ENCODE measurements at regions of chr10 and their contacts with region 1.

Region 1: DNA sequence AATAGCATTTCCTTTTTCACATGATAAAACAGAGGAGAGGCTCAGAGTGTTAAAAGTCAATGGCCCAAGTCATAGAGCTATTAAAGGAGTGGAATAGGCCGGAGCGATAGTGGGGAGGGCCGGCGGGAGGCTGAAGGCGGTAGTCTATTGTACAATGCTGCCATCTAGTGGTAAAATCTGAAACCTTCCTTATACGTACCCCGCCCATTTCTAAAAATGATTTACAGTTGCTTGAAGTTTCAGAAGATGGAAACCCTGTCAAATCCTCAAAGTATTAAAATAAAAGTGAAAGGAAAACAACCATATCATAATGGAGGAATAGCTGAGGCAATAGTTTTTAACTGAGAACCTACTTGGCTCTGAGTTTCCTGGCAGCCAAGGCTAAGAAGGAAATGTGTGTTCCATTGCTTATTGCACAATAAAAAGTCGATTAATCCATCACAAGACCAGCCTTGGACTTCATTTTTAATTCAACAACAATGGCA is 209.1 kb downstream of the CCSER2 start:
- DNase-seq: peak in 5 of 9 experiments; percentile 22 to 76 (median 60)
- ATAC-seq: peak; percentile 69
- H3K4me3 ChIP-seq: no peak overlapping the region
- H3K4me3 Mint-ChIP-seq: no peak overlapping the region
- H3K27ac ChIP-seq: no peak overlapping the region
- H3K27ac Mint-ChIP-seq: no peak overlapping the region
- H3K4me1 ChIP-seq: peaks cover 4% of the 10 kb centered on the region
- H3K4me1 Mint-ChIP-seq: peaks cover 8% of the 10 kb centered on the region
- H3K27me3 ChIP-seq: peaks cover 5 to 9% of the 10 kb centered on the region in 2 experiments
- H3K27me3 Mint-ChIP-seq: peaks cover 24% of the 10 kb centered on the region
- CTCF ChIP-seq: peak; percentile 94

Region 2: DNA sequence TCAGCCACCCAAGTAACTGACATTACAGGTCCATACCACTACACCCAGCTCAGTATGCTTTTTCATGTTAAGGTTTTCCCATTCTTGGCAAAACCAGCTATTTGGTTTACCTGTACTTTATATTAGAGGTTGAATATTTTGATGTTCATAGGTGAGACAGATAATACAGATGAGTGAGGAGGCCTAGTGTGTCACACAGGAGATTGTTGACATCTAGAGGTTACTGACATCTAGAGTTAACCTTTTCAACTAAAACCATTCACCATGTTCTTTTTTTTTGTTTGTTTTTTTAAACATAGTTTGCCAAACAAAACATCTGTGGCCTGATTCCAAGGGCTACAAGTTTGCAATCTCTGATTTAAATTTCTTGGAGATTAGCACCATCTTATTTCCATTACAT is 390.1 kb before region 1 on chr10:
- CTCF ChIA-PET with region 1: no interaction called
- POLR2A ChIA-PET with region 1: no interaction called
- intact Hi-C with region 1: loop called in 1 of 2 experiments (anchors 5 kb)
- DNase-seq: no peak
- ATAC-seq: no peak
- H3K4me3 ChIP-seq: no peak overlapping the region
- H3K4me3 Mint-ChIP-seq: no peak overlapping the region
- H3K27ac ChIP-seq: no peak overlapping the region
- H3K27ac Mint-ChIP-seq: peak overlapping the region; percentile 18
- H3K4me1 ChIP-seq: no peaks in the 10 kb centered on the region
- H3K4me1 Mint-ChIP-seq: peaks cover 23% of the 10 kb centered on the region
- H3K27me3 ChIP-seq: no peaks in the 10 kb centered on the region
- H3K27me3 Mint-ChIP-seq: no peaks in the 10 kb centered on the region
- CTCF ChIP-seq: no peak

Region 3: GRCh38 chr10:84264611-84265141 is 272.8 kb before region 1 on chr10:
- CTCF ChIA-PET with region 1: interaction called, 358 read pairs
- POLR2A ChIA-PET with region 1: interaction called, 11 read pairs
- intact Hi-C with region 1: loop called (anchors 1 kb)
- DNase-seq: peak; percentile 53 to 82 (median 75)
- ATAC-seq: peak; percentile 97
- H3K4me3 ChIP-seq: no peak overlapping the region
- H3K4me3 Mint-ChIP-seq: no peak overlapping the region
- H3K27ac ChIP-seq: no peak overlapping the region
- H3K27ac Mint-ChIP-seq: no peak overlapping the region
- H3K4me1 ChIP-seq: no peaks in the 10 kb centered on the region
- H3K4me1 Mint-ChIP-seq: peaks cover 11% of the 10 kb centered on the region
- H3K27me3 ChIP-seq: no peaks in the 10 kb centered on the region
- H3K27me3 Mint-ChIP-seq: peaks cover 23% of the 10 kb centered on the region
- CTCF ChIP-seq: peak; percentile 98

Region 4: GRCh38 chr10:84360637-84361365 is 176.7 kb before region 1 on chr10:
- CTCF ChIA-PET with region 1: interaction called, 18 read pairs
- POLR2A ChIA-PET with region 1: no interaction called
- intact Hi-C with region 1: no loop called
- DNase-seq: peak in 1 of 9 experiments; percentile 22
- ATAC-seq: no peak
- H3K4me3 ChIP-seq: no peak overlapping the region
- H3K4me3 Mint-ChIP-seq: peak overlapping the region; percentile 20
- H3K27ac ChIP-seq: no peak overlapping the region
- H3K27ac Mint-ChIP-seq: peak overlapping the region; percentile 66
- H3K4me1 ChIP-seq: peaks cover 58% of the 10 kb centered on the region
- H3K4me1 Mint-ChIP-seq: peaks cover 86% of the 10 kb centered on the region
- H3K27me3 ChIP-seq: no peaks in the 10 kb centered on the region
- H3K27me3 Mint-ChIP-seq: no peaks in the 10 kb centered on the region
- CTCF ChIP-seq: no peak

Region 5: DNA sequence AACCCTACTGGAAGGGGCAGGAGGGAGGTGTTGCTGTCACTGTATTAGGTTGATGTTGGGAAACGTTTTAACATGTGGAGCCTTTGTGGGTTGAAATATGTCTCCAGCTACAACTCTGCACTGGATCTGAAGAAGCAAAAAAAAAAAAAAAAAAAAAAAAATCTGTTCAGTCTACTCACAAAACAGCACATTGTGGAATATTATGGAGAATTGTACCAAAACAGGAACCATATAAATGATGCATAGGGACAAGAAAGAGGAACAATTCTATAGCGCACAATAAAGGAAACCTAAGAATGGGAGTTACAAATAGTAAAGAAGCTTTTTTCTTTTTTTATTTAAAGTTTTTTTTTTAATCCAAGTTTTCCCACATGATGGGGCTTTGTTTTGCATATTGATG is 145.3 kb before region 1 on chr10:
- CTCF ChIA-PET with region 1: interaction called, 13 read pairs
- POLR2A ChIA-PET with region 1: no interaction called
- intact Hi-C with region 1: no loop called
- DNase-seq: no peak
- ATAC-seq: no peak
- H3K4me3 ChIP-seq: no peak overlapping the region
- H3K4me3 Mint-ChIP-seq: no peak overlapping the region
- H3K27ac ChIP-seq: no peak overlapping the region
- H3K27ac Mint-ChIP-seq: no peak overlapping the region
- H3K4me1 ChIP-seq: peaks cover 3% of the 10 kb centered on the region
- H3K4me1 Mint-ChIP-seq: peaks cover 64% of the 10 kb centered on the region
- H3K27me3 ChIP-seq: no peaks in the 10 kb centered on the region
- H3K27me3 Mint-ChIP-seq: no peaks in the 10 kb centered on the region
- CTCF ChIP-seq: no peak

Region 6: DNA sequence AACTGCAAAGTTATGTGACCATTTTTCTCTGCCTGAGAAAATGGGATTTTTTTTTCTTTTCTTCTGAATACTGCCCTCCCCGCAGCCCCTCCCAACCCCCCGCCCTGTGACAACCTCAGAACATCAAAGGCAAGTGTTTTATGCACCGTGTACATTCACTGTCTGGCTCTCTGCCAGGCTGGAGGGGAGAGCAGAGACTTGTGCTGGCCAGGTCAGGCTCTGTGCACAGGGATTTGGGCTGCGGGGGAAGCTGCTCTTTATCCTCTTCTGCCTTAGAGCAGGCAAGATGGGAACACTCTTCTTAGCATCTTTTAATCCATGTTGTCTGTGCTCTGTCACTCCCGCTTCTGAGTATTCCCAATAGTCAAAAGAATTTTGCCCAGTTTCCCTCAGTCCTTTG is 14.0 kb before region 1 on chr10:
- CTCF ChIA-PET with region 1: interaction called, 31 read pairs
- POLR2A ChIA-PET with region 1: no interaction called
- intact Hi-C with region 1: no loop called
- DNase-seq: peak in 3 of 9 experiments; percentile 21 to 37 (median 34)
- ATAC-seq: no peak
- H3K4me3 ChIP-seq: no peak overlapping the region
- H3K4me3 Mint-ChIP-seq: no peak overlapping the region
- H3K27ac ChIP-seq: no peak overlapping the region
- H3K27ac Mint-ChIP-seq: no peak overlapping the region
- H3K4me1 ChIP-seq: peaks cover 3% of the 10 kb centered on the region
- H3K4me1 Mint-ChIP-seq: peaks cover 7% of the 10 kb centered on the region
- H3K27me3 ChIP-seq: no peaks in the 10 kb centered on the region
- H3K27me3 Mint-ChIP-seq: no peaks in the 10 kb centered on the region
- CTCF ChIP-seq: no peak

Region 7: GRCh38 chr10:84665883-84666463 is 128.5 kb after region 1 on chr10:
- CTCF ChIA-PET with region 1: no interaction called
- POLR2A ChIA-PET with region 1: no interaction called
- intact Hi-C with region 1: no loop called
- DNase-seq: peak in 2 of 9 experiments; percentile 4 to 9
- ATAC-seq: no peak
- H3K4me3 ChIP-seq: no peak overlapping the region
- H3K4me3 Mint-ChIP-seq: no peak overlapping the region
- H3K27ac ChIP-seq: no peak overlapping the region
- H3K27ac Mint-ChIP-seq: no peak overlapping the region
- H3K4me1 ChIP-seq: no peaks in the 10 kb centered on the region
- H3K4me1 Mint-ChIP-seq: no peaks in the 10 kb centered on the region
- H3K27me3 ChIP-seq: no peaks in the 10 kb centered on the region
- H3K27me3 Mint-ChIP-seq: peaks cover 9% of the 10 kb centered on the region
- CTCF ChIP-seq: no peak

Region 8: GRCh38 chr10:86376852-86377796 is 1839.6 kb after region 1 on chr10:
- CTCF ChIA-PET with region 1: interaction called, 12 read pairs
- POLR2A ChIA-PET with region 1: no interaction called
- intact Hi-C with region 1: loop called in 1 of 2 experiments (anchors 1 kb)
- DNase-seq: peak; percentile 54 to 92 (median 78)
- ATAC-seq: peak; percentile 93
- H3K4me3 ChIP-seq: peak overlapping the region; percentile 12 to 22
- H3K4me3 Mint-ChIP-seq: no peak overlapping the region
- H3K27ac ChIP-seq: no peak overlapping the region
- H3K27ac Mint-ChIP-seq: no peak overlapping the region
- H3K4me1 ChIP-seq: peaks cover 6% of the 10 kb centered on the region
- H3K4me1 Mint-ChIP-seq: peaks cover 3% of the 10 kb centered on the region
- H3K27me3 ChIP-seq: peaks cover 0 to 5% of the 10 kb centered on the region in 2 experiments
- H3K27me3 Mint-ChIP-seq: peaks cover 38% of the 10 kb centered on the region
- CTCF ChIP-seq: peak; percentile 100

Measured in CD8-positive, alpha-beta T cell (primary cell).